Naive thymus-derived CD4-positive, alpha-beta T cell (primary cell): ENCODE measurements at regions of chr5 and their contacts with region 1.

Region 1: DNA sequence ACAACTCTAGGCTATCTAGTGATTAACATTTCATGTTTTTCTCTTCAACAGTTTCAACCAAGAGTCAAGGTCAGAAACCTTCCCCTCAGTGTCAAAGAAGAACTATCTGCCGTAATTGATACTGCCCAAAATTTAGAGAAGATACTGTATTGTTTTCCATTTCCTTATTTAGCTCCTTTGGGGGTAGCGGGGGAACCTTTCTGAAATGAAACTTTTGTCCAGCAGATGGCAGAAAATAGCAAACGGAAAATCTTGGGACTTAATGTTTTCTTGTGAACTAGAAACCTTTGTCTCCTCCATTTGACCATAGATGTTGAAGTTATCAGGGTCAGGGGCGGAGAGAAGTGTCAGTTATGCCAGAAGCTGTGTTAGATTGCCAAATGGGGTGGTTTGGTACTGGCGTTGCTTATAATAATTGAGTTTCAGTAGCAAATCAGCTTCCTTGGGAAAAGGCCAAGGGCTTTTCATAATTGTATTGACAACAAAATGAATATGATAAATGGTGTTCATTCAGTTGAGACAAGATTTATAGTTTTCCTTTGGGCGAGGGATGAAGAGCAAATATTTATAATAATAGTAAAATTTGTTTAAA is 101.7 kb upstream of the TLX3 start:
- DNase-seq: peak in 4 of 9 donors; percentile 5 to 18 (median 12)
- ATAC-seq: no peak
- H3K4me3 ChIP-seq: no peak overlapping the region
- H3K4me3 Mint-ChIP-seq: no peak overlapping the region
- H3K27ac ChIP-seq: no peak overlapping the region
- H3K27ac Mint-ChIP-seq: no peak overlapping the region
- H3K4me1 ChIP-seq: no peaks in the 10 kb centered on the region
- H3K4me1 Mint-ChIP-seq: no peaks in the 10 kb centered on the region
- H3K27me3 ChIP-seq: no peaks in the 10 kb centered on the region
- H3K27me3 Mint-ChIP-seq: peaks cover 5 to 16% (median 7%) of the 10 kb centered on the region in 5 donors

Region 2: DNA sequence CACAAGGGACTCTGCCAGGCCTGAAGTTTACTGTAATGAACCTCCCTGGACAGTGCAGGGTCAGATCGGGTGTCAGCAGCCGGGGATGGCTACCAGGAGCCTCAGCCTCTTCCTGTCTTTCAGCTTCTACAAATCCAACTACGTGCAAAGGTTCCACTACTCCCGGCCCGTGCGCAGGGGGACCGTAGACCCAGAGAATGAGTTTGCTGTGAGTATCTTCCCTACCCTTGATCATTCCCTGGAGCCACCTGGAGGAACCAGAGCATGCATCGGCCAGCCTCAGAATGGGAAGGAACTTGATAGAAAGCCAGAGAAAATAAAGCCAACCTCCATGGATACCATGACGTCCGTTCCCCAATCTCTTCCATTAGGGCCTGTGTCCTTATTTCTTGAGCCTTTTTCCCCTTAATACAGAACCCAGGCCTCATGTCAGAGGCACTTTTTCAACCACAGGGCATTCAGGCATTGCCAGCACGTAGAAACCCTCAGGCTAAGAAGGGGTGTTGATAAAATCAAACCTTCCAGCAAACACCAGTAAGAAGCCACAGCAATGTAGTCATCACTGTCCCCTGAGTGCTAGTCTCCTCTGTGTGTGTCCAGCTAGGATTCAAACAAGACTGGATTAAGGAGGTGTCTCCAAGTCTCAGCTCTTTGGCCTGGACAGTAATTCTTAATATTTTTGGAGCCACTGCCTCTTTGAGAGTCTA is 1150.6 kb before region 1 on chr5:
- CTCF ChIA-PET with region 1: no interaction called
- POLR2A ChIA-PET with region 1: no interaction called
- intact Hi-C with region 1: no loop called
- DNase-seq: no peak
- ATAC-seq: no peak
- H3K4me3 ChIP-seq: no peak overlapping the region
- H3K4me3 Mint-ChIP-seq: no peak overlapping the region
- H3K27ac ChIP-seq: no peak overlapping the region
- H3K27ac Mint-ChIP-seq: no peak overlapping the region
- H3K4me1 ChIP-seq: no peaks in the 10 kb centered on the region
- H3K4me1 Mint-ChIP-seq: no peaks in the 10 kb centered on the region
- H3K27me3 ChIP-seq: no peaks in the 10 kb centered on the region
- H3K27me3 Mint-ChIP-seq: no peaks in the 10 kb centered on the region

Region 3: GRCh38 chr5:171264843-171265242 is 57.5 kb after region 1 on chr5:
- CTCF ChIA-PET with region 1: no interaction called
- POLR2A ChIA-PET with region 1: no interaction called
- intact Hi-C with region 1: no loop called
- DNase-seq: peak in 1 of 9 donors; percentile 5
- ATAC-seq: peak; percentile 37
- H3K4me3 ChIP-seq: no peak overlapping the region
- H3K4me3 Mint-ChIP-seq: peak overlapping the region in 4 of 10 donors; percentile 1 to 6 (median 2)
- H3K27ac ChIP-seq: no peak overlapping the region
- H3K27ac Mint-ChIP-seq: no peak overlapping the region
- H3K4me1 ChIP-seq: peaks cover 0 to 5% of the 10 kb centered on the region in 2 donors
- H3K4me1 Mint-ChIP-seq: peaks cover 5 to 13% (median 6%) of the 10 kb centered on the region in 7 donors
- H3K27me3 ChIP-seq: no peaks in the 10 kb centered on the region
- H3K27me3 Mint-ChIP-seq: peaks cover 0 to 10% (median 0%) of the 10 kb centered on the region in 5 donors

Region 4: DNA sequence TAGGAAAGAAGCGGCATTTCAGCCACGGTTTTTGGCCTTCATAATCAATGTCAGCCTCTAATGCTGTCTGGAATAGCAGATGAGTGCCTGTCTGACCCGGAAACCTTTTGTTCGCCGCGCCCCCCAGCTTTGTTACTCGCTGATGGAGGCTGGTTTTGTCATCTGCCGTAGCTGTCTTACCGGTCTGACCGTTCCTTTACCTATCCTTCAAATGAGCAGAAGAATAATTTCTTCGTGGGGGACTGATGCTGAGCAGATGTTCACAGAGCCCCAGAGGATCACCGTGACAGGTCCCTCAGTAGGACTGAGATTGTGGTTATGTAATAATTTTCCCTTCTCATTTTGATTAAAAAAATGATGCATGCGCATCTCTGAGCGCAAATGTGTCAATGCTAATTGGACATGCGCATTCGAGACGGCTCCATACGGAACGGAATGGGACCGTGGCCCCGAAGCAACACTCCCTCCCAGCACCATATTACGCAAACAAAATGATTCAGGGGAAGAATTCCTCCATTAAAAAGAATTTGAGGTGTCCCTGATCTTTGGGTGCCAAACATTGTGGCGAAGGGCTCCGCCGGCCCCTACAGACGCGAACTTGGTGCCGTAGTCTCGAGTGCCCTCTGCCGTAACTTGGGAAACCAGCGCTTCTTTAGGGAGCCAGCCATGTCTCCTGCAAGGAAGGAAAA is 129.3 kb after region 1 on chr5:
- CTCF ChIA-PET with region 1: interaction called, 3 read pairs
- POLR2A ChIA-PET with region 1: no interaction called
- intact Hi-C with region 1: loop called in 1 of 2 experiments (anchors 2 kb)
- DNase-seq: no peak
- ATAC-seq: peak; percentile 38
- H3K4me3 ChIP-seq: no peak overlapping the region
- H3K4me3 Mint-ChIP-seq: peak overlapping the region; percentile 45 to 74 (median 61)
- H3K27ac ChIP-seq: no peak overlapping the region
- H3K27ac Mint-ChIP-seq: no peak overlapping the region
- H3K4me1 ChIP-seq: no peaks in the 10 kb centered on the region
- H3K4me1 Mint-ChIP-seq: peaks cover 0 to 10% (median 4%) of the 10 kb centered on the region in 7 donors
- H3K27me3 ChIP-seq: no peaks in the 10 kb centered on the region
- H3K27me3 Mint-ChIP-seq: peaks cover 38 to 62% (median 46%) of the 10 kb centered on the region in 5 donors

Region 5: DNA sequence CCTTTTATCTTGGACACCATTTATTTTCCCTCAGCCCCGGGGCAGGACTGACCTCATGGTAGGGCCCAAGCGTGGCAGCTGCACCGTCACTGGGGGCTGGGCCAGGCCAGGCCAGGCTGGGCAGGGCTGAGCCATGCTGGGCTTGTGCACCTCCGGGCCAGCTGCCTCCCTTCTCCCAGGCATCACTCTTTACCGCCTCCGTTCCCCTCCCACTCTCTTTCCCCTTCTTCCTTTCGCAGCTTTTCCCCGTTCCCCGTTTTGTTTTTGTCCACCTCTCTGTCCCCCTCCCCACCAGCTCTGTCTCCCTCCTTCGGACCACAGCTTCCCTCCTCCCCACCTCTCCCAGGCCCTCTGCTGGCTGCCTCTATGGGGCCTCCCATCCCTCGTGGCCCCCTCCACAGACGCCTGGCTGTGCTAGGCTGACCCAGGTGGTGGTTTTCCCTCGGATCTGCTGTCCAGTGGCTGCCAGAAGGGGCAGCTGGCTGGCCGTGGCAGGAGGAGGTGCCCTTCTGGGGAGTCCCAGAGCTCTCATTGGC is 230.0 kb after region 1 on chr5:
- CTCF ChIA-PET with region 1: no interaction called
- POLR2A ChIA-PET with region 1: no interaction called
- intact Hi-C with region 1: loop called in 1 of 2 experiments (anchors 10 kb)
- DNase-seq: no peak
- ATAC-seq: no peak
- H3K4me3 ChIP-seq: no peak overlapping the region
- H3K4me3 Mint-ChIP-seq: no peak overlapping the region
- H3K27ac ChIP-seq: no peak overlapping the region
- H3K27ac Mint-ChIP-seq: no peak overlapping the region
- H3K4me1 ChIP-seq: no peaks in the 10 kb centered on the region
- H3K4me1 Mint-ChIP-seq: peaks cover 0 to 3% (median 0%) of the 10 kb centered on the region in 7 donors
- H3K27me3 ChIP-seq: no peaks in the 10 kb centered on the region
- H3K27me3 Mint-ChIP-seq: no peaks in the 10 kb centered on the region